Right lobe of liver (tissue), 6 donors: ENCODE measurements at regions of chr6 and their contacts with region 1.

Region 1: GRCh38 chr6:123316733-123317323 is 319.9 kb downstream of the TRDN start:
- DNase-seq: no peak
- ATAC-seq: no peak
- H3K4me3 ChIP-seq: no peak overlapping the region
- H3K27ac ChIP-seq: no peak overlapping the region
- H3K4me1 ChIP-seq: peaks cover 0 to 8% (median 0%) of the 10 kb centered on the region in 4 donors
- H3K27me3 ChIP-seq: no peaks in the 10 kb centered on the region
- CTCF ChIP-seq: peak; percentile 40 to 68 (median 68)
- POLR2A ChIP-seq: no peak

Region 2: DNA sequence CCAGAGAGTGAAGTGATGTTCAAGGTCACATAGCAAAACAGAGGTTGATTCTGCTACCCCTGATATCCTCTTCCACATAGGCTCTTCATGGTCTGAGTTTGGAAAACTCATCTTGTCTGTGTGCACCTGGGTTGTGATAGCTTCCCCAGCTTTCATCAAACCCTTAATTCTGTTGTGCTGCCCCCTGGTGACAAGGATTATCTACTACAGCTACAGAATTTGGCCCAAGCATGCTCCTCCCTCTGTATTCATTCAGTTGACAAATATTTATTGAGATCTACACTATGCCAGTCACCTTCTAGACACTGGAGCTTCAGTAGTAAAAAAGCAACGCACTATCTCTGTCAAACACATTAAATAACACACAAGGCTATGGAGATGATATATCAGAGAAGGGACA is 477.4 kb before region 1 on chr6:
- intact Hi-C with region 1: no loop called
- DNase-seq: peak in 1 of 3 donors; percentile 68
- ATAC-seq: peak; percentile 99 to 100 (median 100)
- H3K4me3 ChIP-seq: no peak overlapping the region
- H3K27ac ChIP-seq: no peak overlapping the region
- H3K4me1 ChIP-seq: no peaks in the 10 kb centered on the region
- H3K27me3 ChIP-seq: no peaks in the 10 kb centered on the region
- CTCF ChIP-seq: peak; percentile 54 to 89 (median 60)
- POLR2A ChIP-seq: no peak

Region 3: DNA sequence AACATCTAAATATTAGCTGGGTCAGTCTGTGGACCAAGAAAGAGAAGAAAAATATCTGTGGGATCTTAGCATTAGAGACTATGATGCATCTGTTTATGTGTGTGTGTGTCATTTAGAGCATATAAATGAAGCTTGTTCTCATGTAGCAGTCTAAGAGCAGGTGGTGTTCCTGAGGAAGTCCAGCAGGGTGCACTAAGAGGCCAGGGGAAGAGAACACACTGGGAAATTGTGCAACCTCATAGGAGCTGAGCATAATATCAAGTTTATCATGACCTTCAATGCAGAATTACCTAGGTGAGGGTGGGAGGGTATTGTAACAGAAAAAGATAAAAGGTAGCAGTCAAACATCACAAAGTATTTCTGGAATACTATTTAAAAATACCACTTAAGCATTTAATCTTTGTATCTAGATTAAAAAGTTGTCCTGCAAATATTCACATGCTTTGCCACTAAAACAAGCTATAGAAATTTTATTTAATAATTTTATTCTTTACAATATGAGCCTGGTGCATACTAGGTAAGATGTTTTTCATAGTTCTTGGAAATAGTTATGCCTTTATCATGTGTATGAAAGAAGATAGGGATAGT is 447.3 kb before region 1 on chr6:
- intact Hi-C with region 1: loop called in 1 of 2 experiments (anchors 10 kb)
- DNase-seq: peak in 2 of 3 donors; percentile 23 to 56
- ATAC-seq: peak; percentile 95 to 98 (median 97)
- H3K4me3 ChIP-seq: no peak overlapping the region
- H3K27ac ChIP-seq: no peak overlapping the region
- H3K4me1 ChIP-seq: no peaks in the 10 kb centered on the region
- H3K27me3 ChIP-seq: no peaks in the 10 kb centered on the region
- CTCF ChIP-seq: peak; percentile 65 to 74 (median 72)
- POLR2A ChIP-seq: no peak